Activated CD8-positive, alpha-beta T cell treated with anti-CD3 and anti-CD28 coated beads, Interleukin-2, amount 10 ng/mL, durations not matched to agents 7 days and 5 days (primary cell): ENCODE measurements at regions of chr20 and their contacts with region 1.

Region 1: DNA sequence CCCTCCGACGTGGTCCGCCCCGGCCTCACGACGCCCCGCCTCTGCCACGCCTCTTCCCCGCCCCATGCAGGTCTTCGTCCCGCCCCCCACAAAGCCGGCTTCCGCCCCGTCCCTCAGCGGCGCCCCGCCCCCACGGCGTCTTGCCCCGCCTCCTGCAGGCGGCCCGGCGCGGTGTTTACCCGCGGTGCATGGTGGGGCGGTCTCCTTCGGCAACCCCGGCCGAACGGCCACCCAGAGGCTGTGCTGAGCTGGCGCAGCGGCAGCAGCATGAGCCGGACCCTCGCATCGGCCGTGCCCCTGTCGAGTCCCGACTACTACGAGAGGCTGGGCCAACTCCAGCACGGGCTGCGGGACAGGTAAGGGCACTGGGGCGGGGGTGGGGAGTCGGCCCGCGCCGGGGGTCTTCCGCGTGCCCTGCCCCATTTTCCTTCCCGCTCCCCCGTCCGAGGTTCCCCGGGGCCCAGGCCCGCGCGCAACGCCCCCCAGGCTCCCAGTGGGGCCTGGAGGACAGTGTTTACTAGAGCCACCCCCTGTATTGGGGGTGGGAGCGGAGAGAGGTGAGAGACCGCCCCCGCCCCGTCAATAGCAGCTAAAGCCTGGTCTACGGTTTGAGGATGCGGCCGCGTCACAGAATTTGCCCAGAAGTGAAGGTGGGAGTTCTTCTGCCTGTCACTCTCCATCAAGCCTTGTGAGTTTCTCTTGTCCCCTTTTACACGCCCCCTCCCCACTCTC is at the start of gene KIZ:
- DNase-seq: peak; percentile 97
- ATAC-seq: peak; percentile 99
- H3K4me3 Mint-ChIP-seq: peak within 1 kb of the TSS; percentile 85
- H3K27ac Mint-ChIP-seq: peak within 1 kb of the TSS; percentile 86
- H3K4me1 Mint-ChIP-seq: peaks cover 22% of the 10 kb centered on the region
- H3K27me3 Mint-ChIP-seq: peaks cover 7% of the 10 kb centered on the region
- total RNA-seq, gene KIZ: 16.2 to 19.9 TPM

Region 2: DNA sequence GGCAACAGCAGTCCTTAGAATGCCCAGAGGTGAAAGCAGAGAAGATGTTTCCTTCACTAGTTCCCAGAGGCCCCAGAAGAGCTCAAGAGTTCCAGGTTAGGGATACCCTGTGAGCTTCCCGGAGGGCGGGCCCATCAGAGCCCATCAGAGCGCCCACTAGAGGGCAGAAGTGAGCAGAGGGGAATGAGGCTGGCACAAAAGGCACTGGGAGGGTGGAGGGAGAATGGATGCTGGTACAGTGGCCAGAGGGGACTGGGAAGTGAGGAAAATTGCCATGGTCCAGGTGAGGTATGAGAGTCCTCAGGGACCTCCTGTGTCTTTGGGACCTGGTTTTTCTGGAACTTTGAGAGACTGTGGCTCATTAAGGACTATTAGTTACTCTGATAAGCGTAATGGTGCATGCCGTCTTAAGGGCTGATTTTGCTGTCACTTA is 77.2 kb before region 1 on chr20:
- CTCF ChIA-PET with region 1: interaction called, 14 read pairs
- POLR2A ChIA-PET with region 1: no interaction called
- DNase-seq: peak; percentile 60
- ATAC-seq: peak; percentile 68
- H3K4me3 Mint-ChIP-seq: no peak overlapping the region
- H3K27ac Mint-ChIP-seq: no peak overlapping the region
- H3K4me1 Mint-ChIP-seq: no peaks in the 10 kb centered on the region
- H3K27me3 Mint-ChIP-seq: peaks cover 11% of the 10 kb centered on the region

Region 3: GRCh38 chr20:21099751-21100577 is 26.1 kb before region 1 on chr20:
- CTCF ChIA-PET with region 1: interaction called, 11 read pairs
- POLR2A ChIA-PET with region 1: interaction called, 4 read pairs
- DNase-seq: peak; percentile 76
- ATAC-seq: peak; percentile 62
- H3K4me3 Mint-ChIP-seq: peak overlapping the region; percentile 79
- H3K27ac Mint-ChIP-seq: peak overlapping the region; percentile 88
- H3K4me1 Mint-ChIP-seq: peaks cover 59% of the 10 kb centered on the region
- H3K27me3 Mint-ChIP-seq: peaks cover 72% of the 10 kb centered on the region

Region 4: GRCh38 chr20:21272279-21272678 is 146.3 kb after region 1 on chr20:
- CTCF ChIA-PET with region 1: no interaction called
- POLR2A ChIA-PET with region 1: no interaction called
- DNase-seq: no peak
- ATAC-seq: no peak
- H3K4me3 Mint-ChIP-seq: no peak overlapping the region
- H3K27ac Mint-ChIP-seq: no peak overlapping the region
- H3K4me1 Mint-ChIP-seq: no peaks in the 10 kb centered on the region
- H3K27me3 Mint-ChIP-seq: peaks cover 6% of the 10 kb centered on the region